ENCODE measurements at regions of chr5 and their contacts with region 1.

Region 1: GRCh38 chr5:59390074-59390659 is 503.4 kb downstream of the PDE4D start:
- H3K4me3 Mint-ChIP-seq: no peak overlapping the region
- H3K27ac Mint-ChIP-seq: no peak overlapping the region
- H3K4me1 Mint-ChIP-seq: no peaks in the 10 kb centered on the region
- H3K27me3 Mint-ChIP-seq: no peaks in the 10 kb centered on the region

Region 2: GRCh38 chr5:58886315-58887207 is 503.6 kb before region 1 on chr5:
- intact Hi-C with region 1: no loop called
- H3K4me3 Mint-ChIP-seq: no peak overlapping the region
- H3K27ac Mint-ChIP-seq: no peak overlapping the region
- H3K4me1 Mint-ChIP-seq: peaks cover 10% of the 10 kb centered on the region
- H3K27me3 Mint-ChIP-seq: peaks cover 8% of the 10 kb centered on the region

Region 3: DNA sequence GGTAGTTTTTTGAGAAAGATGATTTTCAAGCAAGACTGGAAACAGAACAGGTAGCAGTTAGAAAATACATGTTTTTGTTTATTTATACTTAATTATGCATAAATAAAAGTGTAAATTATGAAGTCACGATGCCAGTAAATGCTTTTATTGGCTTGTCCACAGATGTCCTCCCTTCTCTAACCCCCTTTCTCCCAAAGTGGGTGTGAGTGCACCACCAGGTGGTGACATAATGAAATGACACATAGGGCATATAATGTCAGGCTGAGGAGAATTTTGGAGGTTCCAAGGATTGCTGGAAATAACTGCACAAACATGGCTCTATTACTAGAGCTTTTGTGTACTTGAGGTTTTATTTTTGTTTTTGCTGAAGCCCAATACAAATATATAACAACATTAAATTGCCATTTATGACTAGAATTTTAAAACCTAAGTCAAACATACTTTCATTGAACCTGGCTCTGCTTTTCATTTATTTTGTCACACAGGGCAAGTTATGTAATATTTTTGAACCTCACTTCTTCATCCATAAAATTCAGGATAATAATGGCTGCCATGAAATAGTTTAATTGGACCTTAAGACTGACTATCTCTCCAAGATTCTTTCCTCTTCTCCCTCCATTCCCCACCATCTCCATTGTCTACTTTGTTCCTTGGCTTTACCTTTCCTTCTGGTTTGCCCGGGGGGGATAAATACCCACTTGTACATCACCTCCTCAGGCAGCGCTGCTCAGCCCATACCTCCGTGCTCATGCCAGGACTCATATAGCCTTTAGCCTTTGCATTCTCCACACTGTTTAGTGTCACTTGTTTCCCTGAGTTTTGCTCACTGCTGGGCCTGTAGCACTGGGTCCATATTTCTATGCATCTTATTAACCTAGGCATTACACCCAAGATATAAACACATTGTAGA is 334.6 kb after region 1 on chr5:
- intact Hi-C with region 1: loop called (anchors 5 kb)
- H3K4me3 Mint-ChIP-seq: no peak overlapping the region
- H3K27ac Mint-ChIP-seq: no peak overlapping the region
- H3K4me1 Mint-ChIP-seq: no peaks in the 10 kb centered on the region
- H3K27me3 Mint-ChIP-seq: no peaks in the 10 kb centered on the region

Measured in dendritic cell treated with granulocyte-macrophage colony-stimulating factor and Interleukin-4, amounts not matched to agents 40 ng/mL and 50 ng/mL, for 4 days (primary cell).